Colonic mucosa (tissue), 4 donors: ENCODE measurements at regions of chr1 and their contacts with region 1.

Region 1: GRCh38 chr1:70410604-70411359 is at the start of gene CTH:
- DNase-seq: peak; percentile 97
- H3K4me3 ChIP-seq: peak within 1 kb of the TSS; percentile 74
- H3K27ac ChIP-seq: peak within 1 kb of the TSS; percentile 90
- H3K4me1 ChIP-seq: no peaks in the 10 kb centered on the region
- H3K27me3 ChIP-seq: no peaks in the 10 kb centered on the region
- CTCF ChIP-seq: no peak
- total RNA-seq, gene CTH: 10.7 to 16.6 TPM

Region 2: DNA sequence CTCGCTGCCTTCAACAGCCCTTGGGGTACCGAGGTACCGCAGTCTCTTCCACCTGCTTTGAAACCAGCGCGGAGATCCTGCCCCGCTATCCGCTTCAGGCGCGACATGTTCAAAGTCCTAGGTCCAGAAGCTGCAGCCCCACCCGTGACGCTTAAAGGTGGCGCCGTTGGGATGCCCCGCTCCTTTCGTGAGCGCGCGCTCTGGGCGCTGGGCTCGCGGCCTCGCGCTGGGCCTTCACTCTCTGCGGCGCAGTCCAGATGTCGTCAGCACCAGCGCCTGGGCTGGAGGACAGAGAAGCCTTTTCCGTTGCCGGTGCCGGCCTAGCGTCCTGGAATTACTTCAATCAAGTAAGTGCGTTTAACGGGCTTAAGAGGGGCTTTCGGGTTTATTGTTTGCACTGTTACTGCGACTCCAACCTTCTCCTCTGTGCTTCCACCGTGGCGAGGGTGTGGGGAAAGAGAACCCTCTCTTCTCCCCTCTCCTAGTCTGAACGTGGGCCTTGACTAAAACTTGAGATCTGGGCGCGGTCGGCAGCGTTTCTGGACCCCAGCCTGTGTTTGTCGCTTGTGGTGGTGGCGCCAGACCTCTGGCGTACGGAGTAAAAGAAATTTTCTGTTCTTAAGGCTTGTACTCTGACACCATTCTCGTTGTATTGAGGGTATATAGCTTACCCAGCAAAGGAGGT is 205.2 kb before region 1 on chr1 and contains the start of gene LRRC40:
- intact Hi-C with region 1: loop called (anchors 5 kb)
- DNase-seq: peak; percentile 98
- H3K4me3 ChIP-seq: peak within 1 kb of the TSS; percentile 87
- H3K27ac ChIP-seq: peak within 1 kb of the TSS; percentile 76
- H3K4me1 ChIP-seq: no peaks in the 10 kb centered on the region
- H3K27me3 ChIP-seq: no peaks in the 10 kb centered on the region
- CTCF ChIP-seq: no peak
- total RNA-seq, gene LRRC40: 10.2 to 10.7 TPM

Region 3: GRCh38 chr1:70354332-70355110 is 56.3 kb before region 1 on chr1 and contains the start of gene ANKRD13C:
- intact Hi-C with region 1: loop called (anchors 2 kb)
- DNase-seq: peak; percentile 95
- H3K4me3 ChIP-seq: peak within 1 kb of the TSS; percentile 93
- H3K27ac ChIP-seq: peak within 1 kb of the TSS; percentile 92
- H3K4me1 ChIP-seq: peaks cover 6% of the 10 kb centered on the region
- H3K27me3 ChIP-seq: no peaks in the 10 kb centered on the region
- CTCF ChIP-seq: no peak
- total RNA-seq, gene ANKRD13C: 22.0 to 23.8 TPM

Region 4: DNA sequence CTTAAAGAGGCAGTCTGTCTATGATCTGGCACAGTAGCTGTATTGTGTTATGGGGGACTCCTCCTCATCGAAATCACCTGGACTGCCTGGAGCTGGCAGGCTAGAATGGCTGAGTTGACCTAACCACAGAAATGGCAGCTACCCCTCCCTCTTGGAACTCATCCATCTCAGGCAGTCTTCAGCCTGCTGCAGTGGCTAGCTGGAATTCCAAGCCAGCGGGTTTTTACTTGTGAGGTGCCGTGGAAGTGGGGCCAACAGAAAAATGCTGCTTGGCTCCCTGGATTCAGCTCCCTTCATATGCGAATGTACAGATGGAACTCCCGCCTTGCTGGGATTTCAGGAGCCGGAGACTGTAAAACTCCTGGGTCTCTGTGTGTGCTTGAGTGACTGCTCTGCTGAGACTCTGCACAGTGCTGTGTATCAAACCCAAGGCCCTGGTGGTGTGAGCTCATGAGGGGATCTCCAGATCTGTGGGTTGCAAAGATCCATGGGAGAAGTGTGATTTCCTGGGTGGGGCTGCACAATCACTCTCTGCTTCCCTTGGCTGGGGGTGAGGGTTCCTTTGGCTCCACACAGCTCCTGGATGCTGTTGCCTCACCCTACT is 317.2 kb after region 1 on chr1:
- intact Hi-C with region 1: no loop called
- DNase-seq: no peak
- H3K4me3 ChIP-seq: no peak overlapping the region
- H3K27ac ChIP-seq: no peak overlapping the region
- H3K4me1 ChIP-seq: no peaks in the 10 kb centered on the region
- H3K27me3 ChIP-seq: no peaks in the 10 kb centered on the region
- CTCF ChIP-seq: no peak